ENCODE measurements at regions of chr16 and their contacts with region 1.

Region 1: GRCh38 chr16:28823872-28824716 is 1.3 kb downstream of the ATXN2L start:
- DNase-seq: peak; percentile 99
- H3K4me3 Mint-ChIP-seq: peak overlapping the region; percentile 92
- H3K27ac Mint-ChIP-seq: peak overlapping the region; percentile 98
- H3K4me1 Mint-ChIP-seq: peaks cover 50% of the 10 kb centered on the region
- H3K27me3 Mint-ChIP-seq: no peaks in the 10 kb centered on the region

Region 2: DNA sequence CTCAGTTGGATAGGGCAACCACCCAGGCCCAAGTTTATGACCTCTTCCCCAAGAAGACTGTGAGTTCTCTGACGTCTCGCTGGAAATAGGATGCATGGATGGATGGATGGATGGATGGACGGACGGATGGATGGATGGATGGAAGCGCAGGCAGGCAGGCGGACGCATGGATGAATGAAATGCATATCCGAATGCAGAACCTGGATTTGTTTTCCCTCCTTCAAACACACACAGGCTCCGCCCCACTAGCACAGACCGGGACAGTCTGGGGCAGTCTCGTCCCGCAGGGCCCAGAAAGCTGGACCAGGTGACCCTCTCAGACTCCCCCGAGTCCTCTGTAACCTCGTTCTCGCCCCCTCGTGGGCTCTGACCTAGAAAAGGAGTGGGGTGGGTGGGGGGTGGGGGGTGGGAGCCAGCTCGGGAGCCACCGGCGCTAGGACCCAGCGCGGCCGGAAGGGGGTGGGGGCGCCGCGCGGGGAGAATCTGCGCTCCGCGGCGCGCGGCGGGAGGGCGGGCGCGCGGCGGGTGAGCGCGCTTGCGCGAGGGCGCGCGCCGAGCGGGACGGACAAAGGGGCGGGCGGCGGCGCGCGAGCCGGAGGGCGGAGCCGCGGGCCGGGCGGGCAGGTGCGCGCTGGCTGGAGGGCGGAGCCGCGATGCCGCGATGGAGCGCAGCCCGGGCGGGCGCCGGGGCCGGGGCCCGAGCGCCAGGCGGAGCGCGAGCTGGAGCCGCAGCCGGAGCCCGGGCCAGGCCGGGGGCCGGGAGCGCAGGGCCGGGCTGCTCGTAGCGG is 532.0 kb before region 1 on chr16 and contains the start of gene SBK1:
- CTCF ChIA-PET with region 1: no interaction called
- intact Hi-C with region 1: loop called (anchors 5 kb)
- DNase-seq: peak; percentile 78
- H3K4me3 Mint-ChIP-seq: peak within 1 kb of the TSS; percentile 87
- H3K27ac Mint-ChIP-seq: peak within 1 kb of the TSS; percentile 83
- H3K4me1 Mint-ChIP-seq: peaks cover 49% of the 10 kb centered on the region
- H3K27me3 Mint-ChIP-seq: no peaks in the 10 kb centered on the region
- total RNA-seq, gene SBK1: 2.8 to 3.4 TPM

Region 3: DNA sequence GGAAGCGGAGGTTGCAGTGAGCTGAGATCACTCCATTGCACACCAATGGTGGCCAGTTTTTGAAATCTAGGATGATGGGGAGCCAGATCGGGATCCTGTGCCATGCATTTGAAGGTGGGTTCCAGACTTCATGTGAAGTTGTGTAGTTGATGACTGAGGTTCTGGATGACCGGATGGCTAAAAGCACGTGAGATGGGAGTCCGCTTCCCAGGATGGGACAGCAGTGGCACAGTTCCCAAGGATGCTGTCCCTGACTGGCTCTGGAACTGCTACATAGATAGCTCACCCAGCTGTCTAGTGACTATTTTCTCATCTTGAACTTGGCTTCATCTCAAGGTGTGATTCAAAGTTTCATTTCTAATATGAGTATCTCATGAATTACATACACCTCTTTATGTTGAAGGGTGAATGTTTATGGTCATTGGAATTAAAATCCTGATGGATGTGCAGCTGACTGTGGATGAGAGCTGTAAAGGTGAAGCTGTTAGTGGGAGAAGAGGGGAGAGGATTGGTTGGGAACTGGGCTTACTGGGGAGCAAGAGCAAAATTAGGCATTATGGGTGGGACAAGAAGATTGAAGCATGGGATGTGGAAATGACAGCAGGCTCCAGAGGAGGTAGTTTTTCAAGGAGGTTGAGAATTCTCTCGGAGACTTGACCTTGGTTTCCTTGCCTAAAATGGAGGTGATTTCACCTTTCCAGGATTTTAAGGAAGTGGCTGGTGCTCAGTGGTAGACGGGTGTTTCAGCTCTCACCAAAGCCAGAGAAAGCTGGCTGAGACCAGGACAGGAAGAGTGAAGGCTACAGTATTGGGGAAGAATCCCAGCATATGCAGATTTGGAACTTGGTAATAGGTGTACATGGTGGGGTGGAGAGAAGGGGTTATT is 13.8 kb after region 1 on chr16:
- CTCF ChIA-PET with region 1: interaction called, 3 read pairs
- intact Hi-C with region 1: loop called (anchors 1 kb)
- DNase-seq: no peak
- H3K4me3 Mint-ChIP-seq: no peak overlapping the region
- H3K27ac Mint-ChIP-seq: peak overlapping the region; percentile 69
- H3K4me1 Mint-ChIP-seq: peaks cover 20% of the 10 kb centered on the region
- H3K27me3 Mint-ChIP-seq: no peaks in the 10 kb centered on the region

Region 4: GRCh38 chr16:28863929-28864793 is 40.1 kb after region 1 on chr16:
- CTCF ChIA-PET with region 1: interaction called, 3 read pairs
- intact Hi-C with region 1: loop called (anchors 1 kb)
- DNase-seq: peak; percentile 21
- H3K4me3 Mint-ChIP-seq: peak overlapping the region; percentile 95
- H3K27ac Mint-ChIP-seq: peak overlapping the region; percentile 96
- H3K4me1 Mint-ChIP-seq: peaks cover 17% of the 10 kb centered on the region
- H3K27me3 Mint-ChIP-seq: no peaks in the 10 kb centered on the region

Region 5: DNA sequence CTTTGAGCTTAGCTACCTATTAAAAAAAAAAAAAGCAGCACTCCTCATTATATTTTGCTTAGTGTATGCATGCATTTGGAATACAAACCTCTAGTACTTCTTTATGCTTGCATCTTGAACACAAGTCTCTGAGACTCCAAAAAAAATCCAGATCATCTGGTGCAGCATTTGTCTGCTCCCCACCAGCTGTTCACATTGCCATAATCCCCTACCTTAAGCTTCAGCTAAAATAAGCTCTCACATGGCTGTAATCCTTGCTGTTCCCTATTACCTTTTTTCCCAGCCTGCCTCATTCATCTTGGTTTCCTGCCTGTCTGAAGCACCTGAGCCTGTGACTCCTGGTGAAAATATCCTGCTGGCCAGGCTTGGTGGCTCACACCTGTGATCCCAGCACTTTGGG is 119.2 kb after region 1 on chr16:
- CTCF ChIA-PET with region 1: interaction called, 6 read pairs
- intact Hi-C with region 1: loop called (anchors 1 kb)
- DNase-seq: no peak
- H3K4me3 Mint-ChIP-seq: no peak overlapping the region
- H3K27ac Mint-ChIP-seq: no peak overlapping the region
- H3K4me1 Mint-ChIP-seq: peaks cover 7% of the 10 kb centered on the region
- H3K27me3 Mint-ChIP-seq: no peaks in the 10 kb centered on the region

Region 6: GRCh38 chr16:28958836-28959235 is 134.7 kb after region 1 on chr16:
- CTCF ChIA-PET with region 1: no interaction called
- intact Hi-C with region 1: no loop called
- DNase-seq: no peak
- H3K4me3 Mint-ChIP-seq: no peak overlapping the region
- H3K27ac Mint-ChIP-seq: no peak overlapping the region
- H3K4me1 Mint-ChIP-seq: peaks cover 5% of the 10 kb centered on the region
- H3K27me3 Mint-ChIP-seq: no peaks in the 10 kb centered on the region

Region 7: GRCh38 chr16:29995911-29996772 is 1172.0 kb after region 1 on chr16 and contains the start of gene INO80E:
- CTCF ChIA-PET with region 1: no interaction called
- intact Hi-C with region 1: no loop called
- DNase-seq: peak; percentile 100
- H3K4me3 Mint-ChIP-seq: peak within 1 kb of the TSS; percentile 98
- H3K27ac Mint-ChIP-seq: peak within 1 kb of the TSS; percentile 98
- H3K4me1 Mint-ChIP-seq: peaks cover 32% of the 10 kb centered on the region
- H3K27me3 Mint-ChIP-seq: no peaks in the 10 kb centered on the region
- total RNA-seq, gene INO80E: 62.0 to 65.4 TPM

Measured in activated naive CD4-positive, alpha-beta T cell treated with anti-CD3 and anti-CD28 coated beads for 36 hours (primary cell).